A673 (cell line): ENCODE measurements at regions of chr2 and their contacts with region 1.

Region 1: DNA sequence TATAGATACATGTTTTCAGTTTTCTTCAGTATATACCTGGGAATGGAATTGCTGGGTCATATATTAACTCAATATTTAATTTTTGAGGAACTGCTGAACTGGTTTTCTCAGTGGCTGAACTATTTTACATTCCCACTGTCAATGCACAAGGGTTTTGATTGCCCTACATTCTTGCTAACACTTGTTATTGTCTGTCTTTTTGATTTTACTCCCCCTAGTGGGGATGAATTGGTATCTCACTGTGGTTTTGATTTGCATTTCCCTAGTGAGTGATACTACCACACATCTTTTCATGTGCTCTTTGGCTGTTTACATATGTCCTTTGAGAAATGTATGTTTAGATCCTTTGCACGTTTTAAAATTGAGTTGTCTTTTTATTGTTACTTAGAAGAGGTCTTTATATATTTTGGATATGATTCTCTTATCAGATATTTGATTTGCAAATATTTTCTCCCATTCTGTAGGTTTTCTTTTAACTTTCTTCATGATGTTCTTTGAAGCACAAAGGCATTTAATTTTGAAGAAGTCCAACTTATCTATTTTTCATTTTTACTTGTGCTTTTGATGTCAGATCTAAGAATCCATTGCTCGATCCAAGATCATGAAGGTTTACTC is 36.2 kb downstream of the ASB1 start:
- DNase-seq: peak; percentile 69
- H3K4me3 ChIP-seq: no peak overlapping the region
- H3K27ac ChIP-seq: no peak overlapping the region
- H3K4me1 ChIP-seq: no peaks in the 10 kb centered on the region
- H3K27me3 ChIP-seq: no peaks in the 10 kb centered on the region
- CTCF ChIP-seq: peak; percentile 75

Region 2: GRCh38 chr2:237731663-237732062 is 731.2 kb before region 1 on chr2:
- CTCF ChIA-PET with region 1: no interaction called
- POLR2A ChIA-PET with region 1: no interaction called
- intact Hi-C with region 1: no loop called
- DNase-seq: peak; percentile 40
- H3K4me3 ChIP-seq: no peak overlapping the region
- H3K27ac ChIP-seq: no peak overlapping the region
- H3K4me1 ChIP-seq: peaks cover 32% of the 10 kb centered on the region
- H3K27me3 ChIP-seq: no peaks in the 10 kb centered on the region
- CTCF ChIP-seq: no peak

Region 3: DNA sequence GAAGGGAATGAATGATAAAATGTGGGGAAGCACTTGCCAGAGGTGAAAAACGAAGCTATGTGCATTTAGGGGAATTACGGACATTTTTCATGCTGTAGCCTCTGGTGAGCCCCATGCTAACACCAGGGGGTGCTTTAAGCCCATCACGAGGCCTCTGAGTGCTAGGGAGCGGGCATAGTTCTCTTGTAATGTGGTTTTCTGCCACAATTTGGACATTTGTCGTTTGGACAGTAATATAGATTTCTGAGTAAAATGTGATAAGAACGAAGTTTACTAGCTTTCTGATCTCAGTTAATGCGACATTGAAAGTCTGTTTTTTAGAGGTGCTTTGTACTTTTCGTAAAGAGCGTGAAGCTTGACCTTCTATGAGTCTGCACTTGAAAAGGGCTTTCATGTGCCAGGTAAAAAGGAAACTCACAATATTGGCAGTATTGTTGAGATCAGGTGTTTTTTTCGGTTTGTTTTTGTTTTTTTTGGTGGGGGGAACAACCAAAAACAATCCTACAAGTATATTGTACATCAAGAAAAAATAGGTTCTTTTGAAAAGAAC is 92.0 kb before region 1 on chr2:
- CTCF ChIA-PET with region 1: interaction called, 3 read pairs
- POLR2A ChIA-PET with region 1: no interaction called
- intact Hi-C with region 1: loop called (anchors 2 kb)
- DNase-seq: peak; percentile 66
- H3K4me3 ChIP-seq: no peak overlapping the region
- H3K27ac ChIP-seq: no peak overlapping the region
- H3K4me1 ChIP-seq: no peaks in the 10 kb centered on the region
- H3K27me3 ChIP-seq: no peaks in the 10 kb centered on the region
- CTCF ChIP-seq: peak; percentile 69

Region 4: GRCh38 chr2:238423561-238424312 is 39.2 kb before region 1 on chr2:
- CTCF ChIA-PET with region 1: interaction called, 12 read pairs
- POLR2A ChIA-PET with region 1: no interaction called
- intact Hi-C with region 1: no loop called
- DNase-seq: no peak
- H3K4me3 ChIP-seq: no peak overlapping the region
- H3K27ac ChIP-seq: no peak overlapping the region
- H3K4me1 ChIP-seq: peaks cover 15% of the 10 kb centered on the region
- H3K27me3 ChIP-seq: no peaks in the 10 kb centered on the region
- CTCF ChIP-seq: no peak

Region 5: GRCh38 chr2:239275044-239275685 is 812.3 kb after region 1 on chr2:
- CTCF ChIA-PET with region 1: interaction called, 14 read pairs
- POLR2A ChIA-PET with region 1: no interaction called
- intact Hi-C with region 1: no loop called
- DNase-seq: peak; percentile 82
- H3K4me3 ChIP-seq: no peak overlapping the region
- H3K27ac ChIP-seq: peak overlapping the region; percentile 64
- H3K4me1 ChIP-seq: peaks cover 38% of the 10 kb centered on the region
- H3K27me3 ChIP-seq: no peaks in the 10 kb centered on the region
- CTCF ChIP-seq: no peak